ENCODE measurements at regions of chr5 and their contacts with region 1.

Region 1: DNA sequence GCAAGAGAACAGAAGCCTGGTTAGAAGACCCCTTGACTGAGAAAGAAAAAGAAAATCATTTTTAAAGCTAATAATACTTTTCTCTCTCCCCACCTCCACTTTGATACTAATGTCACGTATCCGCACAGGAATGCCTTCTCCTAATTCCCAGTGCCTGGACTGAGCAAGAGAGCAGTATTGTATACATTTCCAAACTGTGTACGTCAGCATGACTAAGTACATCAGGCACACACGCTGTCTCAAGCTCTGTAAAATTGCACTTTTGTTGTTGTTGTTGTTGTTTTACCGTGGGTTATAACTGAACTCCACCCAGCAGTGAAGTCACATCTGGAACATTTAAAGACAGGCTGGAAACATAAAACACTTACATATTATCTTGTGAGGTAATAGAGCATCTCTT is 407.6 kb downstream of the DNAH5 start:
- DNase-seq: no peak
- H3K4me3 ChIP-seq: no peak overlapping the region
- H3K27ac ChIP-seq: no peak overlapping the region
- H3K4me1 ChIP-seq: no peaks in the 10 kb centered on the region
- H3K27me3 ChIP-seq: no peaks in the 10 kb centered on the region
- CTCF ChIP-seq: no peak
- POLR2A ChIP-seq: no peak

Region 2: DNA sequence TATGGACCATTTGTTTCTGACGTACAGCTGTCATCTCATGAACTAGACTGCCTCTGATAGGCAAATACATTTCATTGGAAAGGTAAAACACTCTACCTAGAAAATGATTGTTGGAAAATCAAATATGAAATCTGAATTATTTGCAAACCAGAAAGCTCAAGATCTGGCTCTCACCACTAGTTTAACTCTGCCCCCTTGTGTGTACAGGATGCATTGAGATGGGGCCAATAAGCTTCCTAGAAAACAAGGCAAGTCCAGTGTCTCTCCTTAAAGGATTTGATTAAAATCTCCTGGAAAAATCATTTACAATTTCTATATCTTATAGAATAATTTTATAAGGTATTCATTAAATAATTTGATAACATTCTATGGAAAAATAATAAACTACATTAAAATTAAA is 1646.6 kb after region 1 on chr5:
- intact Hi-C with region 1: loop called (anchors 5 kb)
- DNase-seq: no peak
- H3K4me3 ChIP-seq: no peak overlapping the region
- H3K27ac ChIP-seq: no peak overlapping the region
- H3K4me1 ChIP-seq: no peaks in the 10 kb centered on the region
- H3K27me3 ChIP-seq: no peaks in the 10 kb centered on the region
- CTCF ChIP-seq: no peak
- POLR2A ChIP-seq: no peak